ENCODE measurements at regions of chr6 and their contacts with region 1.

Region 1: DNA sequence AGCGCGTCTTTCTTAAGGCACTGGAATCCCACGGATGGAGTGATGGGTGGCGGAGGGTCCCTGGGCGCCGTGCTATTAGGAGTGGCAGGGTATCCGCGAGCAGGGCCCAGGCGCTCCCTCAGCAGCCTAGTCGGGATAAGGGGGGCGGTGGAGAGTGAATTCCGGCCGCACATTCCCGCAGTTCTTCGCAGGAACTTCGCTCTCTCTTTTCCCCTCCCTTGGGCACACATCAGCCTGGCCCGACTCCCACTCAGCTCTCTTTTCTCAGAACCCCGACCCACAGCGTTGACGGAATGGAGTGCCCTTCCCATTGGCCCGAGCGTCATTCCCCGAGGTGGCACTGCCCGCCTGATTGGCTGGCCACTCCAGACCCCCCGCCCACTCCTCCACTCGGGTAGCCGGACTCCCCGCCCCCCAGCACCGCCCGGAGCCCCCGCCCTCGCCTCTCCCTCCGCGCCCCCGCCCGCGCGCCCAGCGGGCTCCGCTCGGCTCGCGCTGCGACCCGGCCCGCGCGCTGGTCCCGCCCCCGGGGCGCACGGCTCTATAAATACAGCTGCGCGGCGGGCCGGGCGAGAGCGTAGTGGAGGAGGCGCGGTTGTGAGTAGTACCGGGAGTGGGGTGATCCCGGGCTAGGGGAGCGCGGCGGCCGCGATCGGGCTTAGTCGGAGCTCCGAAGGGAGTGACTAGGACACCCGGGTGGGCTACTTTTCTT is at the start of gene ID4:
- DNase-seq: peak; percentile 78 to 80
- ATAC-seq: peak; percentile 84 to 91
- H3K4me3 ChIP-seq: peak within 1 kb of the TSS; percentile 59
- H3K27ac ChIP-seq: peak within 1 kb of the TSS; percentile 56 to 86
- H3K4me1 ChIP-seq: peaks cover 19% of the 10 kb centered on the region; the same call in 2 of the 3 replicates
- CTCF ChIP-seq: no peak
- EP300 ChIP-seq: no peak
- POLR2A ChIP-seq: peak; percentile 93
- RAD21 ChIP-seq: no peak
- polyA plus RNA-seq, gene ID4: 1.6 and 2.6 TPM in 2 replicates

Region 2: DNA sequence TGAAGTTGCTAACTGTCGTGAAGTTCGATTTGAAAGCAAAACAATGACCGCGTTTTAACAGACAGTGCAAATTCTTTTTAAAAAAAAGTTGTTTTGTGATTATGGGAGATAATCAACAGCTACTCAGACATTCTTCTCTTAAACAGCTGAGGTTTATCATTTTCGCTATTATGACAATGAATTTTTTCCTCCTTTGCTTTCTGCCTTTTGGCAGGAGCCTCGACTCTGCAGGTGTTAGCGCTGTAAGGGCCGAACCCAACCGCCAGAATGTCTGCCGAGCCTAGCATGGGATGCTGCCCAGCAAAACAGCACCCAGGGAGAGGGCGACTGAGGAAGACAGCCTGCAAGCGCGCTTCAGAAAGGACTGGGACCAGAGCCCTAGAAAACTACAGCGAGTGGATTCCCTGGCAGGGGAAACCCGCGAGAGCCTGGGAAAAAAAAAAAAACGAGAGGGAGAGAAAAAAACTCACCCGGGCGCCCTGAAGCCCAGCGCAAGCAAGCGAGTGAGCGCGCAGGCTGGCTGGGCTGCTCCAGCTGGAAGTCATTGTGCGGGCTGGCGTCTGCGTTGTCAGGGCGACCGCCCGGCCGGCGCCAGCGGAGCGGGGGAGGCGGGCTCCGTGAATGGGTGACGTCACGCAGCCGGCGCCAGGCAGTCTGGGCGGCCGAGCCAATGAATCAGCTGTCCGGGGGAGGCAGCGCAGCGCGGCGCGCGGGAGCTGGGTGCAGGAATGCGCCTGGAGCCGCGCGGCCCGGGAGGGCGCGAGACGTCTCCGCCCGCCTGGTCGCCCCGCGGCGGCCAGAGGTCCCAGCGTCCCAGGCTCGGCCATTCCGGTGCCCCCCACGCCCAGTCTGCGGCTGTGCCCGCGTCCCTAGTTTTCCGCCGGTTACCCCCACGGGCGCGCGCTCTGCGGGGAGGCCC is 32.5 kb before region 1 on chr6:
- CTCF ChIA-PET with region 1: no interaction called
- POLR2A ChIA-PET with region 1: interaction called, 17 read pairs
- DNase-seq: peak; percentile 44 to 92
- ATAC-seq: peak; percentile 97
- H3K4me3 ChIP-seq: peak overlapping the region; percentile 47
- H3K27ac ChIP-seq: peak overlapping the region; percentile 90 to 98
- H3K4me1 ChIP-seq: peaks cover 32% of the 10 kb centered on the region
- CTCF ChIP-seq: no peak
- EP300 ChIP-seq: peak; percentile 42 to 78; a peak in 2 of 5 replicates
- POLR2A ChIP-seq: peak; percentile 30
- RAD21 ChIP-seq: no peak; a peak in 1 of 5 replicates

Measured in A549 (cell line).